ENCODE measurements at regions of chr11 and their contacts with region 1.

Region 1: DNA sequence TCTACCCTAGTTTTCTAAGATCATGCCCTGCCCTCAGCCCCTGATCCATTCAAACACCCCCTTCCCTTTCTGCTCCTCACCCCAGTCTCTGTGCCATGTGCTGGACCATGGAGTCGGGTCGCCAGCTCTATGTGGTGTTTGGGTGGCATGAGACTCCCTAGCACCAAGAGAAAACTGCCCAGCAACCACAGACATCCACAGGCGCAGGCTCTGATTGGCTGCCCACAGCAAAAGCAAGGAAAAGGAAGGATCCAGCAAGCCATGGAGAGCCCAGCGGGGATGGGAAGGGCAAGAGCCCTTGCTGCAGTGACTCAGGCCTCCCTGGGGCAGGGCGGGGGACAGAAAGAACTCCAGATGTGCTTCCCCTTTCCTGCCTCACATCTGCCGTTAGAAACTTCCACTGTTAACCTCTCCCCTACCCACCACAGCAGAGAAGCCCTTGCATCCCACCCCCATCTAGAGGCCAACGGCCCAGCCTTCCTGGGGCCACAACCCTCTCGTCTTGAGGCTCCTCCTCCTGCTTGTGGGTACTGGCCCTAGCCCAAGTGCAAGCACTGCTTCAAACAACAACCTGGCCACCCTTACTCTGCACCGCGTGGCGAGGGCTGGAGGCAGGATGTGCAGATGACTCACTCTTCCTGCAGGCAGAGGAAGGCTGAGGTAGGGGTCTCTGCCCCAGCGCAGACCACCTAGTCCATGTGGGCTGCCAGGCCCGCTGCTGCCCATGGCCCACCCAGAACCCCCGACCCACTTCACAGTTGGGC is 9.7 kb upstream of the AHNAK start:
- DNase-seq: peak; percentile 86
- H3K4me3 ChIP-seq: peak overlapping the region; percentile 27
- H3K27ac ChIP-seq: peak overlapping the region; percentile 87
- H3K27me3 ChIP-seq: no peaks in the 10 kb centered on the region
- CTCF ChIP-seq: no peak

Region 2: GRCh38 chr11:62400760-62401159 is 155.5 kb before region 1 on chr11:
- CTCF ChIA-PET with region 1: interaction called, 120 read pairs
- POLR2A ChIA-PET with region 1: interaction called, 4 read pairs
- DNase-seq: peak; percentile 46
- H3K4me3 ChIP-seq: no peak overlapping the region
- H3K27ac ChIP-seq: no peak overlapping the region
- H3K27me3 ChIP-seq: peaks cover 4% of the 10 kb centered on the region
- CTCF ChIP-seq: no peak

Region 3: DNA sequence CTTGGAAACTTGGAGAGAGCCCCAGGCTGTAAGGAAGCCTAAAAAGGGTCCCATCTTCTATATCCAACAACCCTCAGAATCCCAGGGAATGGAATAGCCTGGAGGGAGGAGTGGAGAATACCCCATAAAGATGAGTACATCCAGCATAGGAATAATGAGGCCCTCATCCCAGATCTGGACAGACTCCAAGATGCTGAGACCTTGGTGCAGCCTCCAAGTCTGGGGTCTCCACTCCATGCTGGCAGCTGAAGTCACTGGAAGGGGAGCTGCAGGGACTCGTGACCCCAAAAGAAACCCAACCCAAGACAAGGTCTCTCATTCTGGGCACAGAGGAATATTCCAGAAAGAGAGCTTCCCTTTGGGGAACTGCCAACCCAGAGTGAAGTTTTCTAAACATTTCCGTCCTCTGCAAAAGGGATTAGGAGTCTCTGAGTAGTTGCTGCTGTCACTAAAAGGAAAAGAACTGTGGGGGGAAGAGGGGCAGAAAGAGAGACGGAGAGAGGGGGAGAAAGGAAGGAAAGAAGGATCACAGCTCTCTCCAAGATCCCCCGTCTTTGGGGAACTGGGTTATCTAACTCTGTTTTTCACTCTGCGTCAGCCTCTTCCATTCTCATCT is 136.9 kb before region 1 on chr11:
- CTCF ChIA-PET with region 1: interaction called, 48 read pairs
- POLR2A ChIA-PET with region 1: interaction called, 6 read pairs
- DNase-seq: no peak
- H3K4me3 ChIP-seq: no peak overlapping the region
- H3K27ac ChIP-seq: peak overlapping the region; percentile 11
- H3K27me3 ChIP-seq: no peaks in the 10 kb centered on the region
- CTCF ChIP-seq: no peak

Region 4: DNA sequence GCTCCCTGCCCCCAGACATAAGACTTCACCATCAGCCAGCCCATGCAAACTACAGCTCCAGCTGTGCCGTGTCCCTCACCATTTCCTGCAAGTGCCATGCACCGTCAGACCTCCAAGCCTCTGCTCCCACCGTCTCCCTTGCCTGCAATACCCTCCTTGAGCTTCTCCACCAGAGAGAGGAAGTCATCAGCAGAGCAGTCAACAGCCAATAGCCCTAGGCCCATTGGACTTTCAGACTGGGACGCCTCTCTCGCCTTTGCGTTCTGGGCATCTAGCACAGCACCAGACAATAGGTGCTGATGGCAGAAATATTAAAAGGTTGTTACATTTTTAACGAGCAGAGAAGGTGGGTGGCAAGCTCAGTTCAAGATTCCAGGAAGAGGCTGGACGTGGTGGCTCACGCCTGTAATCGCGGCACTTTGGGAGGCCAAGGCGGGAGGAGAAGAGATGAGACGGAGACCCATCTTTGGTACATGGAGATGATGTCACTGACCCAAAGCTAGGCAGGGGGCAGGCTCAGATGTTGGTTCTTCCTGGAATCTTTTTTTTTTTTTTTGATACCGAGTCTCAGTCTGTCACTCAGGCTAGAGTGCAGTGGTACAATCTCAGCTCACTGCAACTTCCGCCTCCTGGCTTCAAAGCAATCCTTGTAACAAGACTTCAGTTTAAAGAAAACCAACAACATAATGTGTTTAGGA is 105.6 kb before region 1 on chr11:
- CTCF ChIA-PET with region 1: no interaction called
- POLR2A ChIA-PET with region 1: no interaction called
- DNase-seq: no peak
- H3K4me3 ChIP-seq: no peak overlapping the region
- H3K27ac ChIP-seq: no peak overlapping the region
- H3K27me3 ChIP-seq: no peaks in the 10 kb centered on the region
- CTCF ChIP-seq: no peak

Region 5: GRCh38 chr11:62573592-62574362 is 17.5 kb after region 1 on chr11 and contains the start of gene EEF1G:
- CTCF ChIA-PET with region 1: interaction called, 19 read pairs
- POLR2A ChIA-PET with region 1: interaction called, 29 read pairs
- DNase-seq: peak; percentile 100
- H3K4me3 ChIP-seq: peak within 1 kb of the TSS; percentile 92
- H3K27ac ChIP-seq: peak within 1 kb of the TSS; percentile 98
- H3K27me3 ChIP-seq: no peaks in the 10 kb centered on the region
- CTCF ChIP-seq: no peak
- polyA plus RNA-seq, gene EEF1G: 2,186 and 2,474 TPM in 2 replicates